A673 (cell line): ENCODE measurements at regions of chr15 and their contacts with region 1.

Region 1: DNA sequence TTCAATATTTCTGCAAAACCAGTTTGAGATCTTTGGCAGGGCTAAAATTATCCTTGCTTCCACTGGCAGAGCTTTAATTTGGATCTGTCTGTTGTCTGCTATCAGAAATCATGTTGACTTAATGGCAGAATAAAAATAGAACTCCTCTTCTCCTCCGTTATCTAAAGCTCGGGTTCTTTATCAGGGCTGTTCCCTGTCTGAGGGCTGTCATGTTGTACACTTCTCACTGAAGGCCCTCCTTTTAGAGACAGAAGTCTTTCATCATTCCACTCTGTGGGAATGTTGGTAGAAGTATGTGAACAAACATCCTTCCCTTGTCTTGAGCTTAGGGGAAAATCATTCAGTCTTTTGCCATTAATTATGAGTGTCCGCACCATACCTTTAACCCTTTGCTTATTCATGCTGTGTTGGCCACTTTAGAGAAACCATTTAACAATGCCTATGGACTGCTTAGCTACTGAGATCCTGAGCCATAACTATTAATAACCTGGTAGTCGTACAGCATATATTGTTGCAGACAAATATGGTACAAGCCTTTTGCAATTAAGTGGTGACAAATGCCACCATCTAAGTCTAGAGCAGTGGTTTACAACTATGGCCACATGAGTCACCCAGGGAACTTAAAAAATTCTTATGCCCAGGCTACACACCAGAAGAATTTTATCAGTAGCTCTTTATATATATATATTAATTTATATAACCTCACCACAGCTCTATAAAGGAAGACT is 226.0 kb upstream of the TPM1 start:
- DNase-seq: no peak
- H3K4me3 ChIP-seq: no peak overlapping the region
- H3K27ac ChIP-seq: no peak overlapping the region
- H3K4me1 ChIP-seq: no peaks in the 10 kb centered on the region
- H3K27me3 ChIP-seq: no peaks in the 10 kb centered on the region
- CTCF ChIP-seq: no peak

Region 2: DNA sequence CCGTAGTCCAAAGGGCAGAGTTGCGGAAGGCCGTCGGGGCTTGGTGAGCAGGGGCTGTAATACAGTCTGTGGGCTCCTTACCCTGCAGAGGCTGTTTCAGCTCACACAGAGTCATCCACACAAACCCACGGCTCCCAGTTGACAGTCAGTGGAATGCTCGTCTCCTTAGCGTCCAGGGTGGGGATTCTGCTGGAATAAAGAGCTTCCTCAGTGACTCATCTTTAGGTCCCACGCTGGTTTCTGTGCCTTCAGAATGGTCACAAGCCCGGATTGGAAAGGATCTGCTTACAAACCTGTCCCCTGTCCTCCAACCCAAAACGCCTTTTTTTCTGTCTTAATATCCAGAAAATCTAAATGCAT is 24.7 kb after region 1 on chr15:
- CTCF ChIA-PET with region 1: interaction called, 4 read pairs
- POLR2A ChIA-PET with region 1: interaction called, 18 read pairs
- intact Hi-C with region 1: no loop called
- DNase-seq: peak; percentile 12
- H3K4me3 ChIP-seq: no peak overlapping the region
- H3K27ac ChIP-seq: no peak overlapping the region
- H3K4me1 ChIP-seq: no peaks in the 10 kb centered on the region
- H3K27me3 ChIP-seq: no peaks in the 10 kb centered on the region
- CTCF ChIP-seq: no peak